Breast epithelium (tissue), 4 donors: ENCODE measurements at regions of chr6 and their contacts with region 1.

Region 1: DNA sequence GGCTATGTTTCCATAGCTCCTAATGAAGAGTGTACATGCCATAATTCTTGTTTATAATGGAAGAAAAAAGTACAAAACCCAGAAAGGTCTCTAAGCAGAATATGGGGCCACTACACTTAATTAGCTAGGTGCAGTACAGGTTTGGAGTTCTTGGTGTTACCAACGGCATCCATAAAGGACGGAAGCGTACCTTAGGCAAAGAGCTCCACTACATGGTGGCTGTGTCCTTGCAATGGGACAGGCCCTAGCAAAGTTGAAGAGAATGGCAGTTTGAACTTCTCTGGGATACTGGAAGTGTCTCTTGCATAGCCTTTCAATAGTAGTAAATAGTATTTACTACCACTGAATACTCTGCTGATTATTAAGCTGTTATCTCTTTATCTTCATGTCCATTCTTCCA is 371.7 kb upstream of the MMS22L start:
- DNase-seq: no peak
- H3K4me3 ChIP-seq: no peak overlapping the region
- H3K27ac ChIP-seq: no peak overlapping the region
- H3K4me1 ChIP-seq: no peaks in the 10 kb centered on the region
- H3K27me3 ChIP-seq: no peaks in the 10 kb centered on the region
- CTCF ChIP-seq: no peak
- POLR2A ChIP-seq: no peak

Region 2: DNA sequence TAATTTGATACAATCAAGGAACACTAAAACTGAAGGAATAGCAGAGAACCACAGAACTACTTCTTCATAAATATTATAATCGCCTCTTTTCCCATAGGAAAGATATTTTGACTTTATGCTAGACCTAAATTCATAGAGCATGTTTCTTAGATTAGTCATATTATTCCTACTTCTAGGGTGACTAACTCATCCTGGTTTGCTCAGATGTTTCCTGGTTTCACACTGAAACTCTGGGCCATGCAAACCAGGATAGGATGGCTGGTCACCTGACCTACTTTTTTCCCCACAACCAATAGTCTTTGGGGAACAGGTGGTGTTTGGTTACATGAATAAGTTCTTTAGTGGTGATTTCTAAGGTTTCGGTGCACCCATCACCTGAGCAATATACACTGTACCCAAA is 414.5 kb before region 1 on chr6:
- intact Hi-C with region 1: no loop called
- DNase-seq: no peak
- H3K4me3 ChIP-seq: no peak overlapping the region
- H3K27ac ChIP-seq: no peak overlapping the region
- H3K4me1 ChIP-seq: no peaks in the 10 kb centered on the region
- H3K27me3 ChIP-seq: no peaks in the 10 kb centered on the region
- CTCF ChIP-seq: no peak
- POLR2A ChIP-seq: no peak

Region 3: DNA sequence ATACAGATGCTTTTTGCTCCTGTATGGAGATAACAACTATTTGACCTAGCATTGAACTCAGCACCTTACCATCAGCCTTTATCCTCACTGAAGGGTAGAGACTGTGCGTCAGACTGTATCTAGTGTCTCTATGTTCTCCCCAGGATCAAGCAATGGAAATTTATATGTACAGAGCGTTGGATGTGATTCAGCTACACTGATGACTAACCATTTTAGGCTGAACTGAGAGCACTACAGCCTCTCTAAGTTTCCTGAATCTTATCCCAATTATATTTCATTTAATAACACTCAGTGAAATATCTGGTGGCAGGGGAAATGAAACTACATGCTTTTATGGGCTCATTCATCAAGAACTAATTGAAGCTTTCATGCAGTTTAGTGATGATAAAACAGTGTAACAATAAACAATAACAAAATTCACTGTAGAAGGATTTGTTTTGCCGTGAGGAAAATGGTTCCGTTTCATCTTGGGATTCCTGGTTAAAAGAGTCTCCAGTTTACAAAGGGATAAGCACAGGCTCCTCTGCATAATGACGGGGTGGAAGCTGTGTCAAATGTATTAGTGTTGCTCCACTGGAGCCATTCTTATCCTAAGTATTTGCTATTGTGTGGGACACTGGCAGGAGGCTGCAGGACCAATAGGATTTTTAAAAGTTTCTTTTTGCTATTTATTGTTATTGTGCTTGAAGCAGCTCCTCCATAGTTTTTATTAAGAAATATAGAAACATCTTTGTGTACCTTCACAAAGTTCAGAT is 196.0 kb after region 1 on chr6:
- intact Hi-C with region 1: loop called (anchors 5 kb)
- DNase-seq: no peak
- H3K4me3 ChIP-seq: no peak overlapping the region
- H3K27ac ChIP-seq: no peak overlapping the region
- H3K4me1 ChIP-seq: no peaks in the 10 kb centered on the region
- H3K27me3 ChIP-seq: no peaks in the 10 kb centered on the region
- CTCF ChIP-seq: no peak
- POLR2A ChIP-seq: no peak